Gastrocnemius medialis (tissue), 4 donors: ENCODE measurements at regions of chr9 and their contacts with region 1.

Region 1: GRCh38 chr9:125261501-125262293 is at the start of gene GAPVD1:
- DNase-seq: peak; percentile 68 to 89
- ATAC-seq: peak; percentile 96 to 97
- H3K4me3 ChIP-seq: peak within 1 kb of the TSS; percentile 91 to 99 (median 98)
- H3K27ac ChIP-seq: peak within 1 kb of the TSS; percentile 84 to 97 (median 94)
- H3K4me1 ChIP-seq: peaks cover 27% of the 10 kb centered on the region in 2 donors
- H3K27me3 ChIP-seq: no peaks in the 10 kb centered on the region
- CTCF ChIP-seq: peak; percentile 40 to 60 (median 48)
- POLR2A ChIP-seq: peak; percentile 78 to 89
- total RNA-seq, gene GAPVD1: 46.9 to 66.8 (median 53.6) TPM

Region 2: GRCh38 chr9:125200210-125201047 is 61.3 kb before region 1 on chr9 and contains the start of gene RABEPK:
- in situ Hi-C with region 1: no loop called
- intact Hi-C with region 1: loop called (anchors 1 kb)
- DNase-seq: peak; percentile 81 to 89
- ATAC-seq: peak; percentile 94 to 97
- H3K4me3 ChIP-seq: peak within 1 kb of the TSS; percentile 83 to 97 (median 94)
- H3K27ac ChIP-seq: peak within 1 kb of the TSS; percentile 87 to 99 (median 97)
- H3K4me1 ChIP-seq: peaks cover 3 to 8% of the 10 kb centered on the region in 2 donors
- H3K27me3 ChIP-seq: no peaks in the 10 kb centered on the region
- CTCF ChIP-seq: no peak
- POLR2A ChIP-seq: peak; percentile 86 to 87
- total RNA-seq, gene RABEPK: 8.7 to 15.0 (median 13.4) TPM